Prostate gland (tissue), 2 donors: ENCODE measurements at regions of chr1 and their contacts with region 1.

Region 1: GRCh38 chr1:44575371-44575770 is 98.9 kb downstream of the TMEM53 start:
- DNase-seq: no peak
- H3K4me3 ChIP-seq: no peak overlapping the region
- H3K27ac ChIP-seq: no peak overlapping the region
- H3K4me1 ChIP-seq: no peaks in the 10 kb centered on the region
- H3K27me3 ChIP-seq: no peaks in the 10 kb centered on the region
- CTCF ChIP-seq: no peak
- POLR2A ChIP-seq: no peak

Region 2: DNA sequence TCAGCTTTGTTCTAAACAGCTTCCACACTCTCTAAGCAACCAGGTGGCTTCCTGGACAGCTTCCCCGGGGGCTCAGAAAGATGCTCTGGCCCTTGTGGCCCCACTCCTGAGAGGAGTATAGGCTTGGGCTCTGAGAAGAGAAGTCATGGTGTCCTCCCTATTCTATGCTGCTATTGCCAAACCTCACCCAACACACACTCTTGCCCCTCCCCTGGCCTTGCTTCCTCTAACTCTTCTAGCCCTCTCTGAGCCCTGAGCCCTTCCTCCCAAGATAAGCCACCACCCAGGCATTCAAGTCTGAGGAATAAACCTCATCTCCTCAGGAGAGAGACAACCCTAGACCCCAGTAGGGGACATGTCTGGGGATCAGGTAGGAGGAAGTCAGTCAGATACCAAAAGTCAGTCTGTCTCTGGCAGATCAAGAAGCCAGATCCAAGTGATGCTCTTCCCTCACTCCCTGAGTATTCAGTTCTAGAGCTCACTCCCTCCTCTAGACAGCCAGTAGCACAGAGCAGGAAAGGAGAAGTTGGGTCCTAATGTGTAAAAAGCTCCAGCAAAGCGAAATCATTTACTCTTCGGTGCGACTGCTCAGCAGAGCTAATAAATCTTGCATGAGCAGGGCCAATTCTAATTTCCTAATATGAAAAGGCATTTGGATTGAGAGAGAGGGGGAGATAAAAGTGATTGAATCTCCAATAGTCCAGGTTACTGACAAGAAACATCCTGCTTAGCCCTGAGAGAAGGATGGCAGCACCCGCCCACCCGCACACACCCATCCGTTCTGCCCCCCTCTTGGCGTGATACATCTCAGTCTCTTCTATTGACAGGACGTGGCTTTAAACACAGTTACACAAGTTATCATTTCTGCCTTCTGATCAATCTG is 311.6 kb before region 1 on chr1:
- intact Hi-C with region 1: no loop called
- DNase-seq: no peak
- H3K4me3 ChIP-seq: no peak overlapping the region
- H3K27ac ChIP-seq: no peak overlapping the region
- H3K4me1 ChIP-seq: peaks cover 15% of the 10 kb centered on the region
- H3K27me3 ChIP-seq: no peaks in the 10 kb centered on the region
- CTCF ChIP-seq: no peak
- POLR2A ChIP-seq: no peak

Region 3: GRCh38 chr1:44594871-44595746 is 19.7 kb after region 1 on chr1:
- intact Hi-C with region 1: loop called (anchors 2 kb)
- DNase-seq: peak; percentile 69
- H3K4me3 ChIP-seq: no peak overlapping the region
- H3K27ac ChIP-seq: no peak overlapping the region
- H3K4me1 ChIP-seq: no peaks in the 10 kb centered on the region
- H3K27me3 ChIP-seq: peaks cover 1% of the 10 kb centered on the region
- CTCF ChIP-seq: peak; percentile 93 to 95 (median 95)
- POLR2A ChIP-seq: no peak